Activated CD8-positive, alpha-beta T cell treated with anti-CD3 and anti-CD28 coated beads for 36 hours (primary cell): ENCODE measurements at regions of chr7 and their contacts with region 1.

Region 1: GRCh38 chr7:148527707-148528168 is 62.8 kb upstream of the C7orf33 start:
- DNase-seq: peak; percentile 96
- ATAC-seq: peak; percentile 100
- H3K4me3 Mint-ChIP-seq: no peak overlapping the region
- H3K27ac Mint-ChIP-seq: no peak overlapping the region
- H3K4me1 Mint-ChIP-seq: peaks cover 2% of the 10 kb centered on the region
- H3K27me3 Mint-ChIP-seq: peaks cover 30% of the 10 kb centered on the region
- CTCF ChIP-seq: peak; percentile 80

Region 2: GRCh38 chr7:148398844-148399373 is 128.8 kb before region 1 on chr7:
- CTCF ChIA-PET with region 1: no interaction called
- POLR2A ChIA-PET with region 1: no interaction called
- intact Hi-C with region 1: no loop called
- DNase-seq: no peak
- ATAC-seq: no peak
- H3K4me3 Mint-ChIP-seq: no peak overlapping the region
- H3K27ac Mint-ChIP-seq: no peak overlapping the region
- H3K4me1 Mint-ChIP-seq: no peaks in the 10 kb centered on the region
- H3K27me3 Mint-ChIP-seq: peaks cover 47% of the 10 kb centered on the region
- CTCF ChIP-seq: no peak

Region 3: GRCh38 chr7:148503875-148504487 is 23.8 kb before region 1 on chr7:
- CTCF ChIA-PET with region 1: interaction called, 31 read pairs
- POLR2A ChIA-PET with region 1: no interaction called
- intact Hi-C with region 1: loop called (anchors 2 kb)
- DNase-seq: no peak
- ATAC-seq: no peak
- H3K4me3 Mint-ChIP-seq: no peak overlapping the region
- H3K27ac Mint-ChIP-seq: no peak overlapping the region
- H3K4me1 Mint-ChIP-seq: peaks cover 8% of the 10 kb centered on the region
- H3K27me3 Mint-ChIP-seq: peaks cover 11% of the 10 kb centered on the region
- CTCF ChIP-seq: peak; percentile 89